ENCODE measurements at regions of chr9 and their contacts with region 1.

Region 1: GRCh38 chr9:22452415-22453010 is 5.9 kb downstream of the DMRTA1 start:
- DNase-seq: no peak
- H3K4me3 ChIP-seq: no peak overlapping the region
- H3K27me3 ChIP-seq: peaks cover 6% of the 10 kb centered on the region
- CTCF ChIP-seq: peak; percentile 72

Region 2: DNA sequence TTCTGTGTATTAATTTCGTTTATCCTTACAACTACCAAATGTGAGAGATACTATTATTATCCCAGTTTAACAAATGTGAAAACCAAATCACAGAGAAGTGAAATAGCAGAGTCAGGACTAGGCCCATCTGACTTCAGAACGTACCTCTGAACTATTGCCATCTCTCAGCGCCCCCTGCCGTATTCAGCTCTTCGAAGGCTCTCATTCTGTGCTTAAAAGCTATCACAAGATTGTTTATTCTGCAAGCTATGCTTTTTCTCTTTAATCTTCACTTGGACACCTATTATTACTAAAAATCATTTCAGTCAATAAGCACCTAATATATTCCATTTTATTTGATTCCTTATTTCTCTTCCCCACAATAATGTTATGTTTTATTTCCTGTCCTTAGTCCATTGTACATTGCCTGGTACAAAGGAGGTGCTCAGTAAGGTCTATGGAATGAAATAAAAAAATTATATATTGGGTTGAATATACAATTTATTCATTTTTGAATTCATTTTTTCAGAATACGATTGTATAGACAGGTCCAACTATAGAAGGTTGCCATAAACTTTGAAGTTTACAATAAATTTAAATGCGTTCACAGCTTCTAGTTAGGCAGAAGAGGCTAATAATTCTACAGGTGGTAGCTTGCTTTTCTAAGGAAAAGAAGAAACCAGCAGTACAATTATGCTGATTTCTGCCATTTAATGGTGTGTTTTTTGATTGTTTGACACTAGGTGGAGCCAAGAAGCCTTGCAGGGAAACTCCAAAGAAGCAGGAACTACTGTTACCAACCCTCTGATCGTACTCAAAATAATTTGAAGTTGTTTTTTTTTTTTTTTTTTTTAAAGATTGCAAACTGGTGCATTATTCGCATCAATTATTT is 208.1 kb before region 1 on chr9:
- CTCF ChIA-PET with region 1: interaction called, 14 read pairs
- POLR2A ChIA-PET with region 1: no interaction called
- DNase-seq: no peak
- H3K4me3 ChIP-seq: no peak overlapping the region
- H3K27me3 ChIP-seq: no peaks in the 10 kb centered on the region; the same call in 1 of the 2 replicates
- CTCF ChIP-seq: peak; percentile 67

Region 3: GRCh38 chr9:22307013-22307711 is 145.4 kb before region 1 on chr9:
- CTCF ChIA-PET with region 1: interaction called, 10 read pairs
- POLR2A ChIA-PET with region 1: no interaction called
- DNase-seq: no peak
- H3K4me3 ChIP-seq: no peak overlapping the region
- H3K27me3 ChIP-seq: no peaks in the 10 kb centered on the region
- CTCF ChIP-seq: peak; percentile 62

Measured in BJ (cell line).